ENCODE measurements at regions of chr11 and their contacts with region 1.

Region 1: GRCh38 chr11:98090861-98091505 is 929.8 kb upstream of the CNTN5 start:
- DNase-seq: no peak
- ATAC-seq: no peak
- H3K4me3 ChIP-seq: no peak overlapping the region
- H3K27ac ChIP-seq: no peak overlapping the region
- H3K4me1 ChIP-seq: no peaks in the 10 kb centered on the region
- H3K27me3 ChIP-seq: no peaks in the 10 kb centered on the region
- CTCF ChIP-seq: no peak
- POLR2A ChIP-seq: no peak
- RAD21 ChIP-seq: no peak

Region 2: GRCh38 chr11:97622795-97623194 is 468.2 kb before region 1 on chr11:
- CTCF ChIA-PET with region 1: no interaction called
- POLR2A ChIA-PET with region 1: no interaction called
- dilution Hi-C with region 1: no loop called
- in situ Hi-C with region 1: no loop called
- intact Hi-C with region 1: loop called (anchors 10 kb)
- DNase-seq: no peak
- ATAC-seq: no peak
- H3K4me3 ChIP-seq: no peak overlapping the region
- H3K27ac ChIP-seq: no peak overlapping the region
- H3K4me1 ChIP-seq: no peaks in the 10 kb centered on the region
- H3K27me3 ChIP-seq: no peaks in the 10 kb centered on the region
- CTCF ChIP-seq: no peak
- POLR2A ChIP-seq: no peak
- RAD21 ChIP-seq: no peak

Region 3: DNA sequence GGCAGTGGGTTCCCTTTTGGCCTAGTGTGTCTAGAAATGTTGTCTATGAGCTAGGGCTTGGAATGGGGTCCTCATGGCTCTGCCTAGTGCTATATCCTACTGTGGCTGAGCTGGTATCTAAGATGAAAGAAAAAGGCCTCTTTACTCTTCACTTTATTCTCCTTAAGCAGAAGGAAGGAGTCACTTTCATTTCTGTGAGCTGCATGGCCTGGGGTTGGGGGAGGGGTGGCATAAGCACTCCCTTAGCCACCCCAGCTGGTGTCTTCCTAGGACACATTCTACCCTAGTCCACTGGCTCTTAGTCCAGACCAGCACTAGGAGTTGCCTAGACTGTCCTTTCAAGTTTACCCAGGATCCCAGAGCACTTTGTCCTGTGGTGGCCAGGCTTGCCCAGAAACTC is 219.2 kb before region 1 on chr11:
- CTCF ChIA-PET with region 1: no interaction called
- POLR2A ChIA-PET with region 1: no interaction called
- dilution Hi-C with region 1: no loop called
- in situ Hi-C with region 1: no loop called
- intact Hi-C with region 1: no loop called
- DNase-seq: no peak
- ATAC-seq: no peak
- H3K4me3 ChIP-seq: no peak overlapping the region
- H3K27ac ChIP-seq: no peak overlapping the region
- H3K4me1 ChIP-seq: no peaks in the 10 kb centered on the region
- H3K27me3 ChIP-seq: no peaks in the 10 kb centered on the region
- CTCF ChIP-seq: no peak
- POLR2A ChIP-seq: no peak
- RAD21 ChIP-seq: no peak

Measured in IMR-90 (cell line).